ENCODE measurements at regions of chr15 and their contacts with region 1.

Region 1: GRCh38 chr15:74251131-74251811 is 15.1 kb downstream of the CCDC33 start:
- DNase-seq: peak; percentile 91 to 98
- ATAC-seq: peak; percentile 92 to 93
- H3K4me3 ChIP-seq: no peak overlapping the region
- H3K27ac ChIP-seq: peak overlapping the region; percentile 86 to 90 (median 88)
- H3K4me1 ChIP-seq: peaks cover 34 to 37% of the 10 kb centered on the region in 2 donors
- H3K27me3 ChIP-seq: no peaks in the 10 kb centered on the region
- CTCF ChIP-seq: peak in 4 of 5 experiments; percentile 27 to 32 (median 28)
- POLR2A ChIP-seq: peak in 1 of 2 donors; percentile 31

Region 2: GRCh38 chr15:74156678-74157411 is 94.4 kb before region 1 on chr15:
- in situ Hi-C with region 1: no loop called
- intact Hi-C with region 1: loop called (anchors 5 kb)
- DNase-seq: peak in 1 of 2 donors; percentile 38
- ATAC-seq: peak; percentile 84 to 88
- H3K4me3 ChIP-seq: no peak overlapping the region
- H3K27ac ChIP-seq: peak overlapping the region in 2 of 4 donors; percentile 33 to 34
- H3K4me1 ChIP-seq: peaks cover 8 to 13% of the 10 kb centered on the region in 2 donors
- H3K27me3 ChIP-seq: no peaks in the 10 kb centered on the region
- CTCF ChIP-seq: no peak
- POLR2A ChIP-seq: no peak

Region 3: DNA sequence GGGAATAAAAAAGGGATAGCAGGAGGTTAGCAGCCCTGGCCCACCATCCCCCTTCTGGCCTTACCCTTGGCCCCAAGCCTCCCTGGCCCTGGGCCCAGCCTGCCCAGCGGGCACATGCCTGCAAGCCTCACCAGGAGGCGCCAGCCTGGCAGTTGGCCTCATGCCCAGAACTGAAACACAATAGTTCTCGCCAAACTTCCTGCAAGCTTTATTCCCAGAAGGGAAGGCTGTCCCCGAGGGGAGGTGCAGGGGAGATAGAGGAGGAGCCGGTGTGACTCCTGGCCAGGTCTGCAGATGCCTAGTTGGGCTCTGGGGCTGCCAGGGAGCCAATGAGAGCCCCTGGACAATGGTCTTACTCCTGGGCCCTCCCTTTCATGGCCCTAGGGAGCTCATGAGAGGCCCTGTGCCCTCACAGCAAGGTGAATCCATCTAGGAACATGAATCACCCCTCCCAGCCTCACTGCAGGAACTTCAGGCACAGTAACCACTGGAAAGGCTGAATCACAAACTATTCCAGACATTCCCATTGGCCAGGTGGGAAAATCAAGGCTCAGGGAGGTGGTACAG is 11.2 kb before region 1 on chr15:
- in situ Hi-C with region 1: no loop called
- intact Hi-C with region 1: loop called (anchors 1 kb)
- DNase-seq: peak; percentile 67 to 91
- ATAC-seq: peak; percentile 88 to 92
- H3K4me3 ChIP-seq: no peak overlapping the region
- H3K27ac ChIP-seq: peak overlapping the region; percentile 43 to 75 (median 56)
- H3K4me1 ChIP-seq: peaks cover 15 to 24% of the 10 kb centered on the region in 2 donors
- H3K27me3 ChIP-seq: peaks cover 0 to 3% (median 0%) of the 10 kb centered on the region in 3 donors
- CTCF ChIP-seq: peak; percentile 34 to 52 (median 46)
- POLR2A ChIP-seq: no peak